A673 (cell line): ENCODE measurements at regions of chr4 and their contacts with region 1.

Region 1: DNA sequence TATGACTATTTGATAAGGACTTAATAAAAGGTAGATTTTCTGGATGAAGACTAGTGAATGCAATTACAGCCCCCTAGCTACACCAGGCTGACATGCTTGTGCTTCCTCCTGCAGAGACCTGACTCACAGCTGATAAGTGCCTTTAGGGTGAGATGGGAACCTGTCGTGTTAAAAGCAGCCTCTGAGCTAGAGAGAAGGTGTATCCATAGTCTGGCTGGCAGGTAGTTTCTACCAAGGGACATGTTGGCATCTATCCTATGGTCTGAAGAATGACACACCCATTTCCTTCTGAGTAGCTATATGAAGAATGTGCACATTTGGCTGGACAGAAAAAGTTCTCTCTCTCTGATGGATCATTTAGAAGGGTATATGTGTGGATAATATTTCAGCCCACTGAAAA is 64.1 kb downstream of the PARM1 start:
- DNase-seq: no peak
- H3K4me3 ChIP-seq: no peak overlapping the region
- H3K27ac ChIP-seq: no peak overlapping the region
- H3K4me1 ChIP-seq: no peaks in the 10 kb centered on the region
- H3K27me3 ChIP-seq: no peaks in the 10 kb centered on the region
- CTCF ChIP-seq: no peak

Region 2: DNA sequence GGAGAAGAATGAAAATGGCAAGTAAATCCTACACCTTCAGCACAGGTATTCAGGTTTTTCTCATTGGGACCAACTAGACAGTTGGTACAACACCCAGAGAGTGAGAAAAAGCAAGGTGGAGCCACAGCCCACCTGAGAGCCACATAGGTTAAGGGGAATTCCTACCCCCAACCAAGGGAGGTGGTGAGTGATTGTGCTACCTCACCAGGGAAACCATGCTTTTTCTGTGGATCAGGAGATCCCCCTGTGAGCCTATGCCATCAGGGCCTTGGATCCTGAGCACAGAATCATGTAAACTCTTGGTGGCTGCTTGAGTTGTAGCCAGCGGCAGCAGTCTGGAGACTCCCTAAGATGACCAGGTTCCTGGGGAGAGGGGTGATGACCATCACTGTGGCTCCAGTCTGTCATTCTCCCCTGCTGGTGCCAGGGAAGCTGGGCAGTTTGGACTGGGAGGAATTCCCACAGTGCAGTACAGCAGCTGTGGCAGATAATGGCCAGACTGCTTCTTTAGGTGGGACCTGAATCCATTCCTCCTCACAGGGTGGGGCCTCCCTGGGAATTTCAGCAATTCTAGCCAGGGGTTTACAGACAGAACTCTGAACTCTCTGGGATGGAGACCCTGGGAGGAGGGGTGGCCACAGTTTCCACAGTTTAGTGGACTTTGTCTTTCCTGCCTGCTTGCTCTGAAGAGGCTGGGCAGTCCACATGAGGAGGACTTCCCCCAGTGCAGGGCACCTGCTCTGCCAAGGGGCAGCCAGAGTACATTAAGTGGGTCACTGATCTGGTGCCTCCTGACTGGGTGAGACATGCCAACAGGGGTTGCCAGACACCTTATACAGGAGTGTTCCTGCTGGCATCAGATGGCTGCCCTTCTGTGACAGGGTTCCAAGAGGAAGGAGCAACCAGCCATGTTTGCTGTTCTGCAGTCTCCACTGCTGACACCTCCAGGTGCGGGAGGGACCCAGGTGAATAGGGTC is 20.9 kb before region 1 on chr4:
- CTCF ChIA-PET with region 1: no interaction called
- POLR2A ChIA-PET with region 1: no interaction called
- intact Hi-C with region 1: no loop called
- DNase-seq: no peak
- H3K4me3 ChIP-seq: no peak overlapping the region
- H3K27ac ChIP-seq: no peak overlapping the region
- H3K4me1 ChIP-seq: no peaks in the 10 kb centered on the region
- H3K27me3 ChIP-seq: no peaks in the 10 kb centered on the region
- CTCF ChIP-seq: no peak

Region 3: GRCh38 chr4:75172551-75172950 is 175.6 kb after region 1 on chr4:
- CTCF ChIA-PET with region 1: no interaction called
- POLR2A ChIA-PET with region 1: interaction called, 10 read pairs
- intact Hi-C with region 1: no loop called
- DNase-seq: no peak
- H3K4me3 ChIP-seq: no peak overlapping the region
- H3K27ac ChIP-seq: no peak overlapping the region
- H3K4me1 ChIP-seq: no peaks in the 10 kb centered on the region
- H3K27me3 ChIP-seq: no peaks in the 10 kb centered on the region
- CTCF ChIP-seq: no peak

Region 4: DNA sequence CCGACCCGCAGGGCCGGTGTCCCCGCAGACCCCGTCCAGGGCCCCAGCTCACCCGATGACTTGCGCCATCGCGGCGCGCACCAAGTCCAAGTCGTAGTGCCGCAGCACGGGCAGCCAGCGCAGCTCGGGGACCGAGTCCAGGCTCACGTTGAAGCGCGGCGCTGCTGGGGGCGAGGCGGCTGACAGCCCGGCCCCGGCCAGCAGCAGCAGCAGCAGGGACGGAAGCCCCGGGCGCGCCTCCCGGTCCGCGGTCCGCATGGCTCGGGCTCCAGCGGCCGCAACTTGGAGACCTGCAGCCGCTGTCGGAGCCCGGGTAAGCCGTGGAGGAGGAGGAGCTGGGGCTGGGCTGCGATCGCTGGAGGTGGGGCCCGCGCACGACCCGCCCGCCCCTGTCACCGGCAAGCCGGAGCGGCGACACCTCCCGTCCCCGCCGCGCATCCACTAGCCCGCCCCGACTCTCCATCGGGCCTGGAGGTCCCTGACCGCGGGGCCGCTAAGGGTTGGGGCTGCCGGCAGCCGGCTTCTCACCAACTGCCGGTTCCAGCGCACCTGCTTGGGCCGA is 943.8 kb after region 1 on chr4 and contains the start of gene NAAA:
- CTCF ChIA-PET with region 1: no interaction called
- POLR2A ChIA-PET with region 1: no interaction called
- intact Hi-C with region 1: no loop called
- DNase-seq: peak; percentile 41
- H3K4me3 ChIP-seq: peak within 1 kb of the TSS; percentile 59
- H3K27ac ChIP-seq: peak within 1 kb of the TSS; percentile 40
- H3K4me1 ChIP-seq: no peaks in the 10 kb centered on the region
- H3K27me3 ChIP-seq: no peaks in the 10 kb centered on the region
- CTCF ChIP-seq: no peak
- total RNA-seq, gene NAAA: 4.7 and 5.3 TPM in 2 replicates